Caco-2 (cell line): ENCODE measurements at regions of chr10 and their contacts with region 1.

Region 1: GRCh38 chr10:74021248-74022055 is 23.5 kb downstream of the VCL start:
- DNase-seq: no peak
- H3K4me3 ChIP-seq: no peak overlapping the region
- H3K4me3 Mint-ChIP-seq: no peak overlapping the region
- H3K27ac Mint-ChIP-seq: no peak overlapping the region
- H3K4me1 ChIP-seq: peaks cover 12% of the 10 kb centered on the region; the same call in 1 of the 2 replicates
- H3K4me1 Mint-ChIP-seq: peaks cover 32% of the 10 kb centered on the region
- H3K27me3 ChIP-seq: no peaks in the 10 kb centered on the region
- H3K27me3 Mint-ChIP-seq: no peaks in the 10 kb centered on the region
- CTCF ChIP-seq: no peak

Region 2: DNA sequence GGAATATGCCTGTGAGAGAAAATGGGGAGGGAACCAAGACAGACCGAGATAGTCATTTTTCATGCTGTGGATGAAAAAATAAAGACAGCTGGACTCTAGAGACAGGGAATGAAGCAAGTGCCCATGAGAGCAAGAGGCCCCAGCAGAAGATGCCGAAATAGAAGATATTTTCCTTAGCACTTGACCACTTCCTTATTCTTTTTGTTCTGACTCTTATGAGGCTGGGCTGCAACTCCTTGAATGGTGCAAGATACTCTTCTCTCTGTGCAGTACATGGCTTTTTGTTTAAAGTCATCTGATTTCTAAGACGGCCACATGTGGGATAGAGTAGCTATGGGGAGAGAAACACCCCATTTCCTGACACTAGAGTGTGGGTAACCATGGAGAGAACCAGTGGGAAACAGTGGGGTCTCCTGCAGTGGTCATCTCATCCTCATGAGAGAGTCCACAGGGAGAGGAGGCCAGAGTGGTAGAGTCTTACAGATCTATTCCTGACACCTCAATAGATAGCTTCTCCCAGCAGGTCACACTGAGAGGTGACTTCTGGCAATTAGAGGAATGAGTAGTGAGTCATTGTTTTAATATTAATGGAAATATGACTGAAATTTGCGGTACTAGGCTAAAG is 41.5 kb before region 1 on chr10:
- CTCF ChIA-PET with region 1: no interaction called
- POLR2A ChIA-PET with region 1: no interaction called
- intact Hi-C with region 1: loop called (anchors 1 kb)
- DNase-seq: no peak
- H3K4me3 ChIP-seq: no peak overlapping the region
- H3K4me3 Mint-ChIP-seq: no peak overlapping the region
- H3K27ac Mint-ChIP-seq: no peak overlapping the region
- H3K4me1 ChIP-seq: 0 out of 2 replicates have a peak, but pooled peaks cover 3% of the 10 kb centered on the region
- H3K4me1 Mint-ChIP-seq: peaks cover 16% of the 10 kb centered on the region
- H3K27me3 ChIP-seq: no peaks in the 10 kb centered on the region
- H3K27me3 Mint-ChIP-seq: no peaks in the 10 kb centered on the region
- CTCF ChIP-seq: no peak

Region 3: DNA sequence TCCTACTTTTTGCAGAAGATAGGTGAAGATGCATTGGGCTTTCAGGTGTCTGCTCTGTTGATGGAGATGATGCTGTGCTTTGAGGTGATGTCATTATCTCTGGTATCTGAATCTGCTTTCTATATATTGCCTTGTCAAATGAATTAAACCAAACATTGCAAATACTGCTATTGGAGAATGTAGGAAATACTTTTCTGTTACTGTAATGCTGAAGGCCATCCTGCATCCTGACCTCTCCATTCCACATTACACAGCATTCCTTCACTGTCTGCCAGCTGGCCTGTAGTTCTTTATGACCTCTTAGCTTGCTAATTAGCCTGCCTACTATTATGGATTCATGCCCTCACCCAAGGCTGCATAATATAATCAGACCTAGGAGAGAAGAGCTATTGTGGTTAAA is 49.7 kb after region 1 on chr10:
- CTCF ChIA-PET with region 1: no interaction called
- POLR2A ChIA-PET with region 1: no interaction called
- intact Hi-C with region 1: no loop called
- DNase-seq: no peak
- H3K4me3 ChIP-seq: no peak overlapping the region
- H3K4me3 Mint-ChIP-seq: no peak overlapping the region
- H3K27ac Mint-ChIP-seq: no peak overlapping the region
- H3K4me1 ChIP-seq: no peaks in the 10 kb centered on the region
- H3K4me1 Mint-ChIP-seq: no peaks in the 10 kb centered on the region
- H3K27me3 ChIP-seq: no peaks in the 10 kb centered on the region
- H3K27me3 Mint-ChIP-seq: no peaks in the 10 kb centered on the region
- CTCF ChIP-seq: no peak